Endothelial cell of umbilical vein (primary cell): ENCODE measurements at regions of chr3 and their contacts with region 1.

Region 1: GRCh38 chr3:20480786-20481365 is 294.9 kb upstream of the SGO1 start:
- DNase-seq: peak; percentile 94
- H3K4me3 ChIP-seq: peak overlapping the region in 1 of 3 experiments; percentile 30
- H3K27ac ChIP-seq: peak overlapping the region; percentile 81
- H3K4me1 ChIP-seq: peaks cover 33% of the 10 kb centered on the region
- H3K27me3 ChIP-seq: no peaks in the 10 kb centered on the region
- CTCF ChIP-seq: no peak
- POLR2A ChIP-seq: peak; percentile 52

Region 2: DNA sequence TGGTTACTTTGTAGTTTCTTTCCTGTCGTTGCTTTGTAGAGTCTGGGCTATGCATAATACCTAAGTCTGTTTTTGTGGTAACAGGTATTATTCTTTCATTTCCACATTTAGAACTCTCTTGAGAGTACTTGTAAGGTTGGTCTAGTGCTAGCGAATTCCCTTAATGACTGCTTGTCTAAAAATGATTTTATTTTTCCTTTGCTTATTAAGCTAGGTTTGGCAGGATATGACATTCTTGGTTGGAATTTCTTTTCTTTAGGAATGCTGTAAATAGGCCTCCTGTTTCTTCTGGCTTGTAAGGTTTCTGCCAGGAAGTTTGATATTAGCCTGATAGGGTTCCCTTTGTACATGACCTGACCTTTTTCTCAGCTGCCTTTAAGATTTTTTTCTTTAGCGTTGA is 224.7 kb before region 1 on chr3:
- CTCF ChIA-PET with region 1: no interaction called
- POLR2A ChIA-PET with region 1: no interaction called
- dilution Hi-C with region 1: no loop called
- intact Hi-C with region 1: loop called (anchors 1 kb)
- DNase-seq: peak; percentile 92
- H3K4me3 ChIP-seq: peak overlapping the region in 1 of 3 experiments; percentile 11
- H3K27ac ChIP-seq: peak overlapping the region; percentile 83
- H3K4me1 ChIP-seq: peaks cover 18% of the 10 kb centered on the region
- H3K27me3 ChIP-seq: no peaks in the 10 kb centered on the region
- CTCF ChIP-seq: no peak
- POLR2A ChIP-seq: no peak

Region 3: GRCh38 chr3:20424086-20424485 is 56.8 kb before region 1 on chr3:
- CTCF ChIA-PET with region 1: no interaction called
- POLR2A ChIA-PET with region 1: no interaction called
- dilution Hi-C with region 1: no loop called
- intact Hi-C with region 1: no loop called
- DNase-seq: no peak
- H3K4me3 ChIP-seq: no peak overlapping the region
- H3K27ac ChIP-seq: no peak overlapping the region
- H3K4me1 ChIP-seq: no peaks in the 10 kb centered on the region
- H3K27me3 ChIP-seq: no peaks in the 10 kb centered on the region
- CTCF ChIP-seq: no peak
- POLR2A ChIP-seq: no peak

Region 4: GRCh38 chr3:20462723-20463122 is 18.2 kb before region 1 on chr3:
- CTCF ChIA-PET with region 1: interaction called, 3 read pairs
- POLR2A ChIA-PET with region 1: no interaction called
- dilution Hi-C with region 1: no loop called
- intact Hi-C with region 1: loop called (anchors 1 kb)
- DNase-seq: peak; percentile 77
- H3K4me3 ChIP-seq: no peak overlapping the region
- H3K27ac ChIP-seq: peak overlapping the region; percentile 29
- H3K4me1 ChIP-seq: peaks cover 16% of the 10 kb centered on the region
- H3K27me3 ChIP-seq: no peaks in the 10 kb centered on the region
- CTCF ChIP-seq: no peak
- POLR2A ChIP-seq: no peak